Left lung (tissue), 14 donors: ENCODE measurements at regions of chr21 and their contacts with region 1.

Region 1: GRCh38 chr21:41816220-41817165 is 49.6 kb upstream of the RIPK4 start:
- DNase-seq: peak; percentile 43 to 88 (median 59)
- ATAC-seq: peak; percentile 95
- H3K4me3 ChIP-seq: no peak overlapping the region
- H3K27ac ChIP-seq: no peak overlapping the region
- H3K4me1 ChIP-seq: peaks cover 0 to 5% of the 10 kb centered on the region in 2 donors
- H3K27me3 ChIP-seq: no peaks in the 10 kb centered on the region
- CTCF ChIP-seq: peak; percentile 75 to 82

Region 2: GRCh38 chr21:41612674-41613532 is 203.6 kb before region 1 on chr21:
- intact Hi-C with region 1: loop called in 1 of 2 experiments (anchors 5 kb)
- DNase-seq: peak in 3 of 4 donors; percentile 72 to 76 (median 74)
- ATAC-seq: peak; percentile 83
- H3K4me3 ChIP-seq: no peak overlapping the region
- H3K27ac ChIP-seq: peak overlapping the region; percentile 23 to 33
- H3K4me1 ChIP-seq: peaks cover 7 to 16% of the 10 kb centered on the region in 2 donors
- H3K27me3 ChIP-seq: peaks cover 0 to 37% of the 10 kb centered on the region in 2 donors
- CTCF ChIP-seq: peak; percentile 52 to 57

Region 3: GRCh38 chr21:42117229-42117966 is 300.9 kb after region 1 on chr21:
- intact Hi-C with region 1: loop called in 1 of 2 experiments (anchors 2 kb)
- DNase-seq: peak; percentile 61 to 83 (median 70)
- ATAC-seq: peak; percentile 90
- H3K4me3 ChIP-seq: no peak overlapping the region
- H3K27ac ChIP-seq: no peak overlapping the region
- H3K4me1 ChIP-seq: peaks cover 0 to 37% of the 10 kb centered on the region in 2 donors
- H3K27me3 ChIP-seq: peaks cover 9 to 49% of the 10 kb centered on the region in 2 donors
- CTCF ChIP-seq: peak; percentile 91 to 95